K562 (cell line): ENCODE measurements at regions of chr4 and their contacts with region 1.

Region 1: DNA sequence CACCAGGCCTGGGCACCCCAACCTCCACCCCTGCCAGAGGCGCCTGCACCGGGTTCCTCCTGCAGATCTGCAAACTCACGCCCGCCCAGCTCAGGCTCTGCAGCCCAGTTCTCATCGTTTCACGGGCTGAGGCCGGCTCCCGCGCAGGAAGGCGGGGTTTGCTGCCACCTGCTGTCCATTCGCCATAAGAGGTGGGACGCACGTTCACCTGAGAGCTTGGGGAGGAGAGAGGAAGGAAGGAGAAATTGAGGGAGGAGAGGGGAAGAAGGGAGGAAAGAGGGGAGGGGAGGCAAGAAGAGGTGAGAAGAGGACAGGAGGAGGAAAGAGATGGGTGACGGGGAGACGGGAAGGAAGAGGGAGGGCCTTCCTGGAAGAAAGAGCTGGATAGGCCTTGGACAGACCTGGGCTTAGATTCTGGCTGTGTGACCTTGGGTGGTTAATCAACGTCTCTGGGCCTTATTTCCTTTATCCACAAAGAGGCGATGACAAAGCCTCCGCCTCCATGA is 114.5 kb downstream of the ADRA2C start:
- DNase-seq: peak; percentile 71 to 77 (median 72)
- ATAC-seq: peak; percentile 100
- H3K4me3 ChIP-seq: no peak overlapping the region
- H3K27ac ChIP-seq: no peak overlapping the region
- H3K4me1 ChIP-seq: peaks cover 0 to 12% of the 10 kb centered on the region in 2 experiments; a peak in 2 of 5 replicates
- H3K27me3 ChIP-seq: peaks cover 2 to 21% of the 10 kb centered on the region in 2 experiments; a peak in 4 of 5 replicates
- CTCF ChIP-seq: peak; percentile 70 to 82 (median 71)
- EP300 ChIP-seq: no peak
- POLR2A ChIP-seq: no peak
- RAD21 ChIP-seq: peak; percentile 78 to 84

Region 2: GRCh38 chr4:3480528-3481112 is 400.0 kb before region 1 on chr4:
- CTCF ChIA-PET with region 1: no interaction called
- POLR2A ChIA-PET with region 1: interaction called, 3 read pairs
- in situ Hi-C with region 1: no loop called
- intact Hi-C with region 1: loop called (anchors 1 kb)
- DNase-seq: peak; percentile 83 to 90 (median 86)
- ATAC-seq: peak; percentile 94
- H3K4me3 ChIP-seq: no peak overlapping the region
- H3K27ac ChIP-seq: no peak overlapping the region
- H3K4me1 ChIP-seq: peaks cover 0 to 48% of the 10 kb centered on the region in 2 experiments; a peak in 2 of 5 replicates
- H3K27me3 ChIP-seq: peaks cover 32 to 79% of the 10 kb centered on the region in 2 experiments; a peak in 4 of 5 replicates
- CTCF ChIP-seq: peak; percentile 98
- EP300 ChIP-seq: no peak
- POLR2A ChIP-seq: no peak
- RAD21 ChIP-seq: peak; percentile 54 to 88

Region 3: DNA sequence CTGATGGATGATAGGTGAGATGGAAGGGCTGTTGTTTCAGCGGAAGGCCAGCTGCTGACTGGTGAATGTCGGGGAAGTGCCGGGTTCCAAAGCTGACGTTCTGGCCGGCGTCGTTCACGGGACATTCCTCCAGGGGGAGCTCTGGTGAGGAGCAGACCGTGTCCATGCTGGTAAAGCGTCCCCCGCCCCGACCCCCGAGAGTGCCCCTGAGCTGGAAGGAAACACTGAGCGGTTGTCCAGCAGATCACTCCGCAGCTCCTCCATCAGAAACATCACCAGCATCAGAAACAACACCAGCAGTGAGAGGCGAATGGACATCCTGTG is 133.1 kb before region 1 on chr4:
- CTCF ChIA-PET with region 1: no interaction called
- POLR2A ChIA-PET with region 1: no interaction called
- in situ Hi-C with region 1: no loop called
- intact Hi-C with region 1: loop called (anchors 5 kb)
- DNase-seq: peak; percentile 38 to 47 (median 43)
- ATAC-seq: peak; percentile 75
- H3K4me3 ChIP-seq: no peak overlapping the region
- H3K27ac ChIP-seq: no peak overlapping the region
- H3K4me1 ChIP-seq: no peaks in the 10 kb centered on the region
- H3K27me3 ChIP-seq: peaks cover 18 to 69% of the 10 kb centered on the region in 2 experiments
- CTCF ChIP-seq: peak; percentile 43 to 59 (median 57); a peak in 5 of 6 replicates
- EP300 ChIP-seq: no peak
- POLR2A ChIP-seq: no peak
- RAD21 ChIP-seq: no peak